Ascending aorta (tissue), 2 donors: ENCODE measurements at regions of chr9 and their contacts with region 1.

Region 1: GRCh38 chr9:109817846-109818472 is 38.0 kb downstream of the PALM2AKAP2 start:
- DNase-seq: peak in 1 of 2 donors; percentile 93
- H3K4me3 ChIP-seq: no peak overlapping the region
- H3K27ac ChIP-seq: peak overlapping the region; percentile 79 to 85
- H3K4me1 ChIP-seq: peaks cover 9 to 23% of the 10 kb centered on the region in 2 donors
- H3K27me3 ChIP-seq: no peaks in the 10 kb centered on the region
- CTCF ChIP-seq: peak; percentile 82 to 96 (median 83)

Region 2: GRCh38 chr9:109627041-109627440 is 190.9 kb before region 1 on chr9:
- intact Hi-C with region 1: no loop called
- DNase-seq: no peak
- H3K4me3 ChIP-seq: no peak overlapping the region
- H3K27ac ChIP-seq: no peak overlapping the region
- H3K4me1 ChIP-seq: no peaks in the 10 kb centered on the region
- H3K27me3 ChIP-seq: no peaks in the 10 kb centered on the region
- CTCF ChIP-seq: no peak

Region 3: GRCh38 chr9:109640580-109641371 is 177.2 kb before region 1 on chr9:
- intact Hi-C with region 1: loop called (anchors 2 kb)
- DNase-seq: peak in 1 of 2 donors; percentile 79
- H3K4me3 ChIP-seq: peak overlapping the region; percentile 49 to 67
- H3K27ac ChIP-seq: no peak overlapping the region
- H3K4me1 ChIP-seq: peaks cover 3 to 5% of the 10 kb centered on the region in 2 donors
- H3K27me3 ChIP-seq: no peaks in the 10 kb centered on the region
- CTCF ChIP-seq: no peak

Region 4: GRCh38 chr9:109745335-109746283 is 72.3 kb before region 1 on chr9:
- intact Hi-C with region 1: loop called (anchors 1 kb)
- DNase-seq: peak; percentile 44 to 88
- H3K4me3 ChIP-seq: peak overlapping the region in 1 of 2 donors; percentile 24
- H3K27ac ChIP-seq: peak overlapping the region; percentile 76 to 86
- H3K4me1 ChIP-seq: peaks cover 15 to 31% of the 10 kb centered on the region in 2 donors
- H3K27me3 ChIP-seq: no peaks in the 10 kb centered on the region
- CTCF ChIP-seq: no peak

Region 5: GRCh38 chr9:109792951-109793546 is 24.9 kb before region 1 on chr9:
- intact Hi-C with region 1: loop called (anchors 1 kb)
- DNase-seq: peak in 1 of 2 donors; percentile 63
- H3K4me3 ChIP-seq: no peak overlapping the region
- H3K27ac ChIP-seq: peak overlapping the region; percentile 88 to 96
- H3K4me1 ChIP-seq: peaks cover 20 to 81% of the 10 kb centered on the region in 2 donors
- H3K27me3 ChIP-seq: no peaks in the 10 kb centered on the region
- CTCF ChIP-seq: no peak